SK-N-SH (cell line): ENCODE measurements at regions of chrX and their contacts with region 1.

Region 1: DNA sequence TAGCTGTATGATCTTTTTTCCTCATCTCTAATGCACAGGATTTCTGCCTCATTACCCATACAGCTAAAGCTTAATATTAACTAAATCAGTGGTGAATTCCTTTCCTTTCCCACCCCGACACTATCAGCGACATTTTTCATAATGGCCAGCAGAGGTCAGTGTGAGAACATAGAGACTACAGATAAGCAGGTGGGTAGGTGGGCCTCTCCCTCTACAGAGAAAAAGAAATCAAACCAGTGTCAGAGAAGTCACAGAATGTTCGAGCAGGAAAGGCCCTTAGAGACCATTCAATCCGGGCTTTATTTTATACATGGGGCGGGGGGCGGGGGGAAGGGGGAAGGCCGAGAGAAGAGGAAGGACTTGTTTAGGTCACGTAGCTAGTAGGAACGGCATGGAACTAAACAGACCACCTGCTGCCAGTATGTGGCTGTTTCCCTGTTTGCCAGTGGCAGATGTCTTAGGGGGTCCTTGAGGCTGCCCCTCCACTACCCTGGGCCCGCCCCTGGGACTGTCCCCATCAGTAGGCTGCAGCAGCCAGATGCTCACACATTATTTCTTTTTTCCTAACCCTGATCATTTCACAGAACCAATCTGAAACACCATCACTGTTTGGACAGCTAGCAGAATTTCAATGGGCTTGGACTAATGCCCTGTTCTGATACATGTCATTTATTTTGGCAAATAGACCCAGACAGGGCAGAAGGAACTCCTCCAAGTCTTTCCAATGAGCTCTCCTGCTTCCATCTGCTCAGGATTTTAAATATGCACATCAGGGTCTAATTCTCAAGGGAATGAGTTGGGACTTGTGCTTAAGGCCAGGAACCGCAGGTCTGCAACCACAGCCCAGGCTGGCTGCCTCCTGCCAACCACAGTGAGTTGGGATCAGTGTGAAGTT is 133.4 kb downstream of the ATG4A start:
- DNase-seq: peak; percentile 19
- H3K4me3 ChIP-seq: no peak overlapping the region; a peak in 1 of 4 replicates
- H3K27ac ChIP-seq: no peak overlapping the region
- H3K4me1 ChIP-seq: no peaks in the 10 kb centered on the region
- H3K27me3 ChIP-seq: peaks cover 37% of the 10 kb centered on the region; the same call in 1 of the 2 replicates
- CTCF ChIP-seq: peak; percentile 72
- EP300 ChIP-seq: no peak
- RAD21 ChIP-seq: peak; percentile 67

Region 2: GRCh38 chrX:108203540-108203939 is 21.4 kb before region 1 on chrX:
- CTCF ChIA-PET with region 1: interaction called, 10 read pairs
- POLR2A ChIA-PET with region 1: no interaction called
- DNase-seq: no peak
- H3K4me3 ChIP-seq: no peak overlapping the region
- H3K27ac ChIP-seq: no peak overlapping the region
- H3K4me1 ChIP-seq: no peaks in the 10 kb centered on the region
- H3K27me3 ChIP-seq: peaks cover 14% of the 10 kb centered on the region; the same call in 1 of the 2 replicates
- CTCF ChIP-seq: no peak
- EP300 ChIP-seq: no peak
- RAD21 ChIP-seq: no peak

Region 3: DNA sequence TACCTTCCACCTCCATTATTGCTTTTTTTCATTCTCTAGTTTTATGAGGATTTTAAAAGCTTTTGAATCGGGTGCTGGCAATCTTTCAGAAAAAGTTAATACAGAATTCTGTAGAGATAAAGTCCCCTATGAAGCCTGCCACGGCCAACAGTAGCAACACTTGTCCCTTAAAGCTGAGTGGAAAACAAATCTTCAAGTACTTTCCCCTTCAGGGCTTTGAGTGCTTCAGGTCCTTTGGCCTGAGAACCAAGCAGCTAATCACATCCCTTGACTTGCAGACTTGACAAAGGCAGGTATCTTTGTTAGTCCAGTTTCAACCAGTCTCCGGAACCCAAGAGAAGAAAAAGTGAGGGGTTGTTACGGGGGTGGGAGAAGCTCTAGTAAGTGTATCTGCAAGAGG is 11.0 kb after region 1 on chrX:
- CTCF ChIA-PET with region 1: interaction called, 16 read pairs
- POLR2A ChIA-PET with region 1: no interaction called
- DNase-seq: no peak
- H3K4me3 ChIP-seq: no peak overlapping the region
- H3K27ac ChIP-seq: no peak overlapping the region
- H3K4me1 ChIP-seq: no peaks in the 10 kb centered on the region
- H3K27me3 ChIP-seq: peaks cover 16% of the 10 kb centered on the region; the same call in 1 of the 2 replicates
- CTCF ChIP-seq: no peak
- EP300 ChIP-seq: no peak
- RAD21 ChIP-seq: no peak

Region 4: GRCh38 chrX:108250654-108251579 is 25.9 kb after region 1 on chrX:
- CTCF ChIA-PET with region 1: no interaction called
- POLR2A ChIA-PET with region 1: no interaction called
- DNase-seq: no peak
- H3K4me3 ChIP-seq: no peak overlapping the region
- H3K27ac ChIP-seq: no peak overlapping the region
- H3K4me1 ChIP-seq: no peaks in the 10 kb centered on the region; a peak in 1 of 4 replicates
- H3K27me3 ChIP-seq: peaks cover 7% of the 10 kb centered on the region; the same call in 1 of the 2 replicates
- CTCF ChIP-seq: no peak
- EP300 ChIP-seq: no peak
- RAD21 ChIP-seq: no peak